ENCODE measurements at regions of chr4 and their contacts with region 1.

Region 1: GRCh38 chr4:12778706-12779105 is 705.4 kb downstream of the RAB28 start:
- DNase-seq: no peak
- H3K4me3 Mint-ChIP-seq: no peak overlapping the region
- H3K27ac Mint-ChIP-seq: no peak overlapping the region
- H3K4me1 Mint-ChIP-seq: no peaks in the 10 kb centered on the region
- H3K27me3 Mint-ChIP-seq: no peaks in the 10 kb centered on the region

Region 2: DNA sequence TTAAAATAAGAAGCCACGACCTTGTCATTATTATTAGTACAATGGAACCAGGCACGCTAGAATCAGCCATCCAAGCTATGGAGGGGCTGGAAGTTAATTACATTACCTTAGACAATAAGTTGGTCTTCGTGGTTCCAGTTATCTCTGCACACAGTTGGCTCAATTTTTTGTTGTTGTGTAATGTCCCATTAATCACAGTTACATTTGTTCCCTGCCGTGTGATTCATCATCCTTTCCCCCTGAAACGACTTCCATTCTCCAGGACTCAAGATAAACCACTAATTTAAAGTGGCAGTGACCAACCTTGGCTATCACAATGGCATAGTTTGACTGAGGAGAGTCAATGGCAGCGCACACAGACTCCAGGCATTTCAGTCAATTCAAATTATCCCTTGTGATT is 199.5 kb before region 1 on chr4:
- CTCF ChIA-PET with region 1: no interaction called
- intact Hi-C with region 1: no loop called
- DNase-seq: no peak
- H3K4me3 Mint-ChIP-seq: no peak overlapping the region
- H3K27ac Mint-ChIP-seq: no peak overlapping the region
- H3K4me1 Mint-ChIP-seq: no peaks in the 10 kb centered on the region
- H3K27me3 Mint-ChIP-seq: no peaks in the 10 kb centered on the region

Region 3: DNA sequence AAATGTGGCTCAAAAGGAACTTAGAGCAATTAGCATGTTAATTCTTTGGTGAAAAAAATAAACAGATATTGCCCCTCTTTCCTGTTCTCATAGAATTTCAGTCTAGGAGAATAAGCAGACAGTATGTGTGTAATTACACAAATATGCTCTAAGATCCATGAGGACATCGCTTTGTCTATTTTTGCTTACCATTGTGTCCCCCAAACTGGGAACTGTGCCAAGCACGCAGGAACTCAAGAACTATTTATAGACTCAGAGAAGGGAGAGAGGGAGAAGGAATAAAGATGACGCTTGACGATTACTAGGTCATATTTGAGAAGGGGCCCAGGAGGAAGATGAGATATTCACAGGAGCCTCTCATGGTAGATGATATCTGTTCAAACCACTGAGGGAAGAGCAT is 12.8 kb after region 1 on chr4:
- CTCF ChIA-PET with region 1: no interaction called
- intact Hi-C with region 1: loop called (anchors 1 kb)
- DNase-seq: no peak
- H3K4me3 Mint-ChIP-seq: no peak overlapping the region
- H3K27ac Mint-ChIP-seq: no peak overlapping the region
- H3K4me1 Mint-ChIP-seq: no peaks in the 10 kb centered on the region
- H3K27me3 Mint-ChIP-seq: no peaks in the 10 kb centered on the region

Region 4: GRCh38 chr4:13344216-13344615 is 565.5 kb after region 1 on chr4:
- CTCF ChIA-PET with region 1: no interaction called
- intact Hi-C with region 1: no loop called
- DNase-seq: no peak
- H3K4me3 Mint-ChIP-seq: no peak overlapping the region
- H3K27ac Mint-ChIP-seq: no peak overlapping the region
- H3K4me1 Mint-ChIP-seq: no peaks in the 10 kb centered on the region
- H3K27me3 Mint-ChIP-seq: no peaks in the 10 kb centered on the region

Measured in activated naive CD4-positive, alpha-beta T cell treated with anti-CD3 and anti-CD28 coated beads for 36 hours (primary cell).